Colonic mucosa (tissue), 4 donors: ENCODE measurements at regions of chr13 and their contacts with region 1.

Region 1: DNA sequence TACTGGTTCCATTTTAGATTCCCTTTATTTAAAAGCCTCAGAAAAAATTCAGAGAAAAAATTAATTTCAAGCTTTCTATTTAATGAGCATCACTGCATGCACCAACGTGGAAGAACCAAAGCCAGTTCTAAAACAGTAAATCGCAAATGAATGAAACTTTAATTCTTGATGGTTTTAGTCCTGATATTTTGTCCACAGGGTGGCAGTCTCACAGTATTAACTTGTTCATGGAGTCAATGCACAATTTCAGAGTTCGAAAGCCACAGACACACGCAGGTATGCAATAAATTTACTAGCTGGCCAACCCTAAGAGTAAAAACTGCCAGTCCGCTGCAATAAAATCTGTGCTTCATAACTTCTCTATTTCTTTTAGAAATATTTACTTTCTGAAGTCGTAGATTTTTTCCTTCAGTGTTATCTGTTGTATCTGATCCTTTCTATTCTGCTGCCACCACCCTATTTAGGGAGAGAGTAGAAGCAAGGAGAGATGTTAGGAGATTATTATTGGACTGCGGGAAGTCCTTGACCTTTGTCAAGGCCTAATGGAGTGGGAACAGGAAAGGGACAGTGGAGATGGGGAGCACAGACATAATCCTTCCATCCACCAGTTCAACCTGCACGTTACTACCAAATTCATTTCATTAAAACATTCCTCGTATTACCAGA is 7.0 kb upstream of the WBP4 start:
- DNase-seq: peak; percentile 75
- H3K4me3 ChIP-seq: no peak overlapping the region
- H3K27ac ChIP-seq: peak overlapping the region; percentile 48
- H3K4me1 ChIP-seq: peaks cover 26% of the 10 kb centered on the region
- H3K27me3 ChIP-seq: no peaks in the 10 kb centered on the region
- CTCF ChIP-seq: peak; percentile 64

Region 2: DNA sequence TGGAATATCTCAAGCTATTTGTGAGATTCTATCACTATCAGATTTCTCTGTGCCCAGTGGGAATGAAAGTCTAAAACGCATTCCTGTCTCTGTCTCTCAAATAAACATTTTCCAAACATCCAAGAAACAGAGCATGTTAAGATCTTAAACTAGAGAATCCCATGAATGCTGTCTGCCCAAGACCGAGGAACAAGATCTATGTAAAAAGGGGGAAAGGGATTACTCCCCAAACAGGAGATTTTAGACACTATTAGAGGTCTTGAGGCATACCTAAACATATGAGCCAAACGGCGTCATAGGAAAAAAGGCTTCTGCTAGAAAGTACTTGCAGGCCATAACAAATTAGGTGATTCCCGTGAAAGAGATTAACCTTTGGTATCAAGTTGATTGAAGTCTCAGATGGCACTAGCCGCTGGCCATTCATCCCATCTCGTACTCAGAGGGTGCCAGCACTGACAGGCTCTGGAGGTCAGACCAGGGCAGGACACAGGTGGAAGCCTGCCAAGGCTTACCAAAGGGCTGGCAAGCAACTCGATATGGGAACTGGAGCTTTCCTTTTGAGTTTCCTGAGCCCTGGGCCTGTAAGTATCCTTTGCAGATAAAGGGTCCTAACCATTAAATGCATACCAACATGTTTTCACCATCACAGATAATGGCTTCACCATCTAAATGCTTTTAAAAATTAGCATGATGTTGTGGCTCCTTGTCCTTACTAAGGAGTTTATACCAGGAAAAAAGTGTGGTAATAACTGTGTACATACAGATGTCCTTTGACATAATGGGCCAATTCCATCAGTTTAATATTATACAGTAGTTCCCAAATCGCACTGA is 613.1 kb before region 1 on chr13:
- intact Hi-C with region 1: no loop called
- DNase-seq: peak; percentile 55
- H3K4me3 ChIP-seq: no peak overlapping the region
- H3K27ac ChIP-seq: no peak overlapping the region
- H3K4me1 ChIP-seq: no peaks in the 10 kb centered on the region
- H3K27me3 ChIP-seq: no peaks in the 10 kb centered on the region
- CTCF ChIP-seq: no peak

Region 3: DNA sequence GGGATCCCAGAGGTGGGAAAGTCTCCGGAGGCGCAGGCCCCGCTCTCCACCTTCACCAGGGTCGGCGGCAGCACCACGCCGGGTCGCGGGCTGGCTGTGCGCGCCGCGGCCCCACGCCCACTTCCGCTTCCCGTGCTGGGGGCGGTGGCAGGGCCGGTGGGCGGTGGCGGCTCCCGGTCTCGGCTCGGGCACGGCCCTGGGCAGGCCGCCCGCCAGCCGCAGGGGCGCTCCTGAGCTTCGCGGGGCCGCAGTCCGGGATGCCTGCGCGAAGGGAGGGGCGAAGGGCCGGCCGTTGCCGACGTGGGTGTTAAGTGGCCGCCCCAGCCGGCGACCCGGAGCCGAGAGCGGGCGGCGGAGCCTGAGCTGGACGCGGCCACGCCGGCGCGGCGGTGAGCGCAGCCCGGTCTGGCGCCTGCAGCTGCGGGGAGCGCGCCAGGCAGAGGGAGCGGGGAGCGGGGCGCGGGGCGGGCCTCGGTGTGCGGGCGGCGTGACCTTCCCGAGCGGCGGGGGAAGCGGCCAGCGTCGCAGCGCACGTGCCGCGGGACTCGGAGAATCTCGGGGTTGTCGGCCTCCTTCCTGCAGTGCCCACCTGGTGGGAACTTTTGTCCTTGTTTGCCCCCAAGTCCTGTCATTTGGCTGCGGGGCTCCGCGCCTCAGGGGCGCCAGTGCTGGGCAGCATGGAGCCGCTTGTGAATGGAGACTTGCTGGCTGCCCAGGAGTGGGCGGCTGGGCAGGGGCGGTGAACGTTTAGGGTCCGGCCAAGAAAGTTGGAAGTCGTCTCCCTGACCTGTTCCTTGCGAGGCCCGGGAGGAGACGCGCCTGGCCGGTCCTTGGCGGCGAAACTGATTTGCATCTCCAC is 264.8 kb before region 1 on chr13 and contains the start of gene SLC25A15:
- intact Hi-C with region 1: loop called (anchors 10 kb)
- DNase-seq: peak; percentile 78
- H3K4me3 ChIP-seq: peak within 1 kb of the TSS; percentile 79
- H3K27ac ChIP-seq: peak within 1 kb of the TSS; percentile 87
- H3K4me1 ChIP-seq: no peaks in the 10 kb centered on the region
- H3K27me3 ChIP-seq: no peaks in the 10 kb centered on the region
- CTCF ChIP-seq: no peak
- total RNA-seq, gene SLC25A15: 6.8 to 14.5 TPM

Region 4: DNA sequence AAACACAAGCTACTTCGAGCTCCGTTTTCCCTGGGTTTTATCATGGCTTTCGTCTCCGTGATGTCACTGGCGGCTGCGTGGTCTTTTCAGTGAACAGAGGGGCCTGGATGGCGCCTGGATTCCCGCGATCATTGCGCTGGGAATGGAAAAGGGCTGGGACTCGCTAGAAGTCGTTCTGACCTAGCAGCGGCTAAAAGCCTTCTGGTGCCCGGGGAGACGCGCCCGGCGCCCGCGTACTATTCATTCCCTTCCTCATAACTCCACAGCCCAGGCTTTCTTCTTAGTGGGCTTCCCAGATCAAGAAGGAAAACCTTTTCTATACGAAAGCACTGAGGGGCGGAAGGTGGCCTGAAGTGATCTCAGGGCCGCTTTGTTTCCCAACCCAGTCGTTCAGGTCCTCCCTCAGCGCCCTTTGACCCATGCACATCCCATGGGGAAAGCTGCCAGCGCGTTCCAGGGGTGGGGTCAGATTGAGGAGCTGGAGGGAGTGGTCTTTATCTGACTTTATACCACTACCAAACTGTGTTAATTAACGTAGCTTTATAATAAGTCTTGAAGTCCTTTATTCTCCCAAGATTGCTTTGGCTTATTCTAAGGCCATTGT is 131.8 kb before region 1 on chr13:
- intact Hi-C with region 1: loop called (anchors 10 kb)
- DNase-seq: peak; percentile 91
- H3K4me3 ChIP-seq: no peak overlapping the region
- H3K27ac ChIP-seq: peak overlapping the region; percentile 90
- H3K4me1 ChIP-seq: no peaks in the 10 kb centered on the region
- H3K27me3 ChIP-seq: no peaks in the 10 kb centered on the region
- CTCF ChIP-seq: no peak

Region 5: DNA sequence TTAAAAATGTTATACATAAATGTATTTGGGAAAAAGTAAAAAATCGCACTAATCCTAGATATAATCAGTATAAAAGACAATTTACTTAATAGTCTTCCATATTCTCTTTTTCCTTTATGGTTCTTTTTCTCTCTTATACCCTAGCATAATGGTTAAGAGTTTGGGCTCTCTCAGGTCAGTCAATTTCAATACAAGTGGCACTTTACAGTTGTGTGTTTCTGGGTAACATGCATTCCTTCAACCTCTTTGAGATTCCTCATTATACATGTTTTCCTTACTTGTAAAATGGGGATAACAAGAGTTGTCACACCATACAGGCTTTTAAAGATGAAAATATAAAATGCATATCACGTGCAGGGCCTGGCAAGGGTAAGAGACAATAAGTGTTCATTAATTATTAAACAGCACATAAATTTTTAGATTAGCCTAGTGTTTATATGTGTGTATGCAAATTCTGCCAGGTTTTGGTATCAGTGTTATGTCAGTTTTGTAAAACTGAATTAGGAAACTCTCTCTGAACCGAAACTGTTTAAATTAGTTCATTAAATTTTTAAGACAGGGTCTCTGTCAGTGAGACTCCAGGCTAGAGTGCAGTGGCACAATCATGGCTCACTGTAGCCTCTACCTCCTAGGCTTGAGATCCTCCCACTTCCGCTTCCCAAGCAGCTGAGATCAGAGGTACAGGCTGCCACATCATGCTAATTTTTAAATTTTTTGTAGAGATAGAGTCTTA is 85.0 kb before region 1 on chr13:
- intact Hi-C with region 1: no loop called
- DNase-seq: no peak
- H3K4me3 ChIP-seq: no peak overlapping the region
- H3K27ac ChIP-seq: no peak overlapping the region
- H3K4me1 ChIP-seq: peaks cover 18% of the 10 kb centered on the region
- H3K27me3 ChIP-seq: no peaks in the 10 kb centered on the region
- CTCF ChIP-seq: no peak

Region 6: GRCh38 chr13:40992678-40993518 is 61.4 kb before region 1 on chr13:
- intact Hi-C with region 1: loop called (anchors 10 kb)
- DNase-seq: no peak
- H3K4me3 ChIP-seq: no peak overlapping the region
- H3K27ac ChIP-seq: peak overlapping the region; percentile 51
- H3K4me1 ChIP-seq: peaks cover 10% of the 10 kb centered on the region
- H3K27me3 ChIP-seq: no peaks in the 10 kb centered on the region
- CTCF ChIP-seq: no peak